Left cardiac atrium (tissue), 4 donors: ENCODE measurements at regions of chrX and their contacts with region 1.

Region 1: GRCh38 chrX:106791495-106791894 is 11.0 kb upstream of the TBC1D8B start:
- DNase-seq: no peak
- ATAC-seq: no peak

Region 2: GRCh38 chrX:106481341-106481740 is 310.2 kb before region 1 on chrX:
- intact Hi-C with region 1: loop called (anchors 5 to 10 kb)
- DNase-seq: no peak
- ATAC-seq: peak; percentile 40 to 71

Region 3: GRCh38 chrX:106611679-106612392 is 179.7 kb before region 1 on chrX and contains the start of gene RADX:
- intact Hi-C with region 1: loop called in 1 of 2 experiments (anchors 10 kb)
- DNase-seq: peak; percentile 80
- ATAC-seq: peak; percentile 96 to 100
- total RNA-seq, gene RADX: 1.2 to 1.9 TPM